Activated naive CD4-positive, alpha-beta T cell treated with anti-CD3 and anti-CD28 coated beads for 36 hours (primary cell): ENCODE measurements at regions of chrX and their contacts with region 1.

Region 1: GRCh38 chrX:134603806-134604700 is 54.2 kb downstream of the PLAC1 start:
- DNase-seq: peak; percentile 6
- H3K4me3 Mint-ChIP-seq: no peak overlapping the region
- H3K27ac Mint-ChIP-seq: peak overlapping the region; percentile 31
- H3K4me1 Mint-ChIP-seq: peaks cover 16% of the 10 kb centered on the region
- H3K27me3 Mint-ChIP-seq: peaks cover 11% of the 10 kb centered on the region

Region 2: DNA sequence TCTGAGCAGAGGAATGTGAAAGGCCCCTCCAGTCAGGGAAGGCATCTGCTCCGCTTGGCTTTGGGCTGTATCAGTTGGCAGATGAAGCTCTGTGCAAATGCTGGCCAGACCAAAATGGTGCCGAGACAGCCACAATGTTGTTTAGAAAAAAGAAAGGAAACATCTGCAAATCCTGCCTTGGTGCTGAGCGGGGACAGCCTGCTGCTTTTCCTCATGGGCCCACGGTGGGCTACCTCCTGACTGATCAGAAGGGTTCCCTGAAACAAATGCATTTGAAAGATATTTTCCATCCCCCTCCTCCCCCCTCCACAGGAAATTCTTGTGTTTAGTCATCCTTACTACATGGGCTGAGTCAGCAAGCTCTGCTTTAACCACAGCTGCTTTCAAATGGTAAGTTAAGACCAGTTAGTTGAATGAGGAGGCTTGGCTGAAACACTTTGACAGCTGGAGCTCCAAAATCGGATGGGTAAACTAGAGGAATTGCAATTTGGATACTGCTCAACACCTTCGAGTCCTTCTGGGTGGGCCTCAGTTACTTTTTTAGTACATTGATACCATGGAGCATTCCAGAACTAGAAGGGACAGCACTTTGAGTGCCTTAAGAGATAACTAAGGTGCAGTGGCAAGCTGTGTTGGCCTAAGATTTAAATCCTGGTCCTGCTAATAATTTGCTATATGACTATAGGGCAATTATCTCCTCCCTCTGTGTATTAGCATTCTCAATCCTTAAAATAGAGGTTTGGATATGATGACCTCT is 18.2 kb after region 1 on chrX:
- CTCF ChIA-PET with region 1: no interaction called
- intact Hi-C with region 1: loop called (anchors 1 kb)
- DNase-seq: peak; percentile 46
- H3K4me3 Mint-ChIP-seq: no peak overlapping the region
- H3K27ac Mint-ChIP-seq: no peak overlapping the region
- H3K4me1 Mint-ChIP-seq: peaks cover 19% of the 10 kb centered on the region
- H3K27me3 Mint-ChIP-seq: peaks cover 35% of the 10 kb centered on the region

Region 3: GRCh38 chrX:134718105-134718965 is 114.3 kb after region 1 on chrX:
- CTCF ChIA-PET with region 1: no interaction called
- intact Hi-C with region 1: loop called (anchors 1 kb)
- DNase-seq: no peak
- H3K4me3 Mint-ChIP-seq: no peak overlapping the region
- H3K27ac Mint-ChIP-seq: no peak overlapping the region
- H3K4me1 Mint-ChIP-seq: peaks cover 18% of the 10 kb centered on the region
- H3K27me3 Mint-ChIP-seq: no peaks in the 10 kb centered on the region